ENCODE measurements at regions of chr4 and their contacts with region 1.

Region 1: DNA sequence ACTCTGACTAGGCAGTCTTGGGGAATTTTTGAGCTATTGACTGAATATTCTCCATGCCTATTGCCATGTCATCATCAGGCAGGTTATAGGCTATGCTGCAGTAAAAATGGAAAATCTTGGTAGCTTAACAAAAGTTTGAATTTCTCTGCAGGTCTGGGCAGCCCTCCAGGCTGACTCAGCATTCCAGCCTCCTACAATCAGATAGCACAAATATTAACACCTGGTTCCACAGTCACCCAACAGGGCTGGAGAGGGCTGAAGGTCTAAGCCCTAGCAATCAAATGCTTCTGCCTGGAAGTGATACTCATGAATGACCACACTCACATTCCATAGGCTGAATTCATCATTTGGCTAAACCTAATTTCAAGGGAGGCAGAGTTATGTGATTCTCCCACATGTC is 9.6 kb upstream of the PPP3CA start:
- DNase-seq: no peak
- ATAC-seq: no peak
- H3K4me3 ChIP-seq: no peak overlapping the region
- H3K4me3 Mint-ChIP-seq: no peak overlapping the region
- H3K27ac ChIP-seq: no peak overlapping the region
- H3K27ac Mint-ChIP-seq: no peak overlapping the region
- H3K4me1 ChIP-seq: no peaks in the 10 kb centered on the region
- H3K4me1 Mint-ChIP-seq: no peaks in the 10 kb centered on the region
- H3K27me3 ChIP-seq: no peaks in the 10 kb centered on the region
- H3K27me3 Mint-ChIP-seq: peaks cover 50% of the 10 kb centered on the region
- CTCF ChIP-seq: no peak

Region 2: DNA sequence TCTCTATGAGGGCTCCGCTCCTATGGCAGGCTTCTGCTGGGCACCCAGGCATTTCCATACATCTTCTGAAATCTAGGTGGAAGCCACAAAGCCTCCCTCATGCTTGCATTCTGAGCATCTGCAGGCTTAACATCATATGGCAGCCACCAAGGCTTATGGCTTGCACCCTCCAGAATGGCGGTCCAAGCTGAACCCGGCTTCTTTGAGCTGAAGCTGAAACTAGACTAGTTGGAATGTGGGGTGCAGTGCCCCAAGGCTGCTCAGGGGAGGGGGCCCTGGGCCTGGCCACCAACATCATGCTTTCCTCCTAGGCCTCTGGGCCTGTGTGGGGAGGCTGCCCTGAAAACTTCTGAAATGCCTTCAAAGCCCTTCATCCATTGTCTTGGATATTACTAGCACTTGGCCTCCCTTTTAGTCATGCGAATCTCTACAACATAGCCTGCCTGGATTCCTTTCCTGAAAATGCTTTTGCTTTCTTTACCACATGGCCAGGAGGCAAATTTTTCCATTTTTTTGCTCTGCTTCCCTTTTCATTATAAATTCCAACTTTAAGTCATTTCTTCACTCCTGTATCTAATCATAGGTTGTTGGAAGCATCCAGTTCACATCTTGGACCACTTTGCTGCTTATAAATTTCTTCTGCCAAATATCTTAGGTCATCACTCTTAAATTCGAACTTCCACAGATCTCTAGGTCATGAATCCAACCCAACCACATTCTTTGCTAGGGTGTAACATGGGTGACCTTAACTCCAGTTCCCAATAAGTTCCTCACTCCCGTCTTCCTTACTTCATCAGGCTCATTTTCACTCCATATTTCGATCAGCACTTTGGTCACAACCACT is 1270.1 kb before region 1 on chr4:
- CTCF ChIA-PET with region 1: no interaction called
- POLR2A ChIA-PET with region 1: no interaction called
- intact Hi-C with region 1: loop called in 1 of 2 experiments (anchors 5 kb)
- DNase-seq: no peak
- ATAC-seq: no peak
- H3K4me3 ChIP-seq: no peak overlapping the region
- H3K4me3 Mint-ChIP-seq: no peak overlapping the region
- H3K27ac ChIP-seq: no peak overlapping the region
- H3K27ac Mint-ChIP-seq: no peak overlapping the region
- H3K4me1 ChIP-seq: no peaks in the 10 kb centered on the region
- H3K4me1 Mint-ChIP-seq: no peaks in the 10 kb centered on the region
- H3K27me3 ChIP-seq: no peaks in the 10 kb centered on the region
- H3K27me3 Mint-ChIP-seq: no peaks in the 10 kb centered on the region
- CTCF ChIP-seq: no peak

Region 3: DNA sequence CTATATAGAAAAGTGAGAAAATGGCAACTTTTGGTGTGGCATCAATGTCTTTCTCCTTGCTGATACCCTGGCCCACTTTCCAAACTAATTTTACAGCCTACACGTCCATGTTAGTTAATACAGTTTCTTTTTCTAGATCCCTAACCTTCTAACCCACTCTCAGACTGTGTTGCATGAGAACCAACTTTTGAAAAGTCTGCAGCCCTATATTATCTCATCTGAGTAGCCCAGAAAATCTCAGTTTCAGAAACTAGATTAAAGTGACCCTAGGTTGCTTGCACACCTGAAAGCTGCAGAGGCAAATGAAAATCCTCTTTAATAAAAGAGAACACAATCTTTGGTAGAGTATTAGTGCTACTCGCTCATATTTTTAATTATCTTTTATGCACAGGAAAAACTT is 467.5 kb before region 1 on chr4:
- CTCF ChIA-PET with region 1: no interaction called
- POLR2A ChIA-PET with region 1: no interaction called
- intact Hi-C with region 1: no loop called
- DNase-seq: no peak
- ATAC-seq: no peak
- H3K4me3 ChIP-seq: no peak overlapping the region
- H3K4me3 Mint-ChIP-seq: no peak overlapping the region
- H3K27ac ChIP-seq: no peak overlapping the region
- H3K27ac Mint-ChIP-seq: no peak overlapping the region
- H3K4me1 ChIP-seq: no peaks in the 10 kb centered on the region
- H3K4me1 Mint-ChIP-seq: no peaks in the 10 kb centered on the region
- H3K27me3 ChIP-seq: no peaks in the 10 kb centered on the region
- H3K27me3 Mint-ChIP-seq: no peaks in the 10 kb centered on the region
- CTCF ChIP-seq: no peak

Measured in CD4-positive, alpha-beta T cell (primary cell).